Left ventricle myocardium inferior (tissue), 1 donor: ENCODE measurements at regions of chr3 and their contacts with region 1.

Region 1: DNA sequence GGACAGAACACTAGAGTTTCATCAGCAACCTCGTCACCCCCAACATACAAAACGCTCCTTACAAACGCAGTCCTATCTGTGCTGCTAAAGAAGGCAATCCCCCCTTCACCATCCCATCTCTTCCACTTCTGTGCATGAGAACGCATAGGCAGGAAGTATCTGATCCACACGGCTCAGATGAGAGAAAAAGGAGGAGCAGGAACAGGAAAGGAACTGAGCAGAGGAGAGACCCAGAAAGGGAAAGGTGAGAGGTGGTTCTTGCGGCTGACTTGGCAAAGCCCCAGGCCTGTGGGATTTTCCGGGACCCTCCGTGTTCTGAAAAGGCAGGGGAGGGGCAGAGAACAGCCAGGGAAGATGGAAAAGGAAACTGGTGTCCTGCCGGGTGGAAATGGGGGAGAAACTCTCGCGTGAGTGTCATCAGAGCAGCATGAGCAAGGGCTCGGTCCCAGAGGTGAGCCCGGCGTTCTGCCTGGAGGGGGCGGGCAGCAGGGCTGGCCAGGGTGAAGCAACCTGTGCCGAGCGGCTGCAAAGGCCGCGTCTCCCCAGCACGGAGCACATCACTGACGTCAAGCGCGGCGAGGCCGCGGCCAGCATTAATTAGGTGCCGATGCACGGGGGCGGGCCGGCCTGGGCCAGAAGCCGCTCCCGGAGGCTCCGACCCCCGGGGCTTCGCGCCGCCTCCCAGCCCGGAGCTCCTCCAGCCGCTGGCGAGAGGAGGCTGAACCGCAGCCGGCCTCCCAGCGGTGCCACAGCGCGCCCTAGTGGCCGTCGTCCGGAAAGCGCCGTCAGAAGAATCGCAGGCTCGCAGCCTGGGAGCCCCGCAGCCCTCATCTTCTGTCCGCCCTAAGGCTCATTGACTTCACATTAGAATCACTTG is 35.8 kb downstream of the CPN2 start:
- DNase-seq: peak; percentile 86
- H3K4me3 ChIP-seq: peak overlapping the region; percentile 67
- H3K27ac ChIP-seq: peak overlapping the region; percentile 57
- H3K4me1 ChIP-seq: peaks cover 28% of the 10 kb centered on the region
- H3K27me3 ChIP-seq: peaks cover 63% of the 10 kb centered on the region
- CTCF ChIP-seq: peak; percentile 98

Region 2: DNA sequence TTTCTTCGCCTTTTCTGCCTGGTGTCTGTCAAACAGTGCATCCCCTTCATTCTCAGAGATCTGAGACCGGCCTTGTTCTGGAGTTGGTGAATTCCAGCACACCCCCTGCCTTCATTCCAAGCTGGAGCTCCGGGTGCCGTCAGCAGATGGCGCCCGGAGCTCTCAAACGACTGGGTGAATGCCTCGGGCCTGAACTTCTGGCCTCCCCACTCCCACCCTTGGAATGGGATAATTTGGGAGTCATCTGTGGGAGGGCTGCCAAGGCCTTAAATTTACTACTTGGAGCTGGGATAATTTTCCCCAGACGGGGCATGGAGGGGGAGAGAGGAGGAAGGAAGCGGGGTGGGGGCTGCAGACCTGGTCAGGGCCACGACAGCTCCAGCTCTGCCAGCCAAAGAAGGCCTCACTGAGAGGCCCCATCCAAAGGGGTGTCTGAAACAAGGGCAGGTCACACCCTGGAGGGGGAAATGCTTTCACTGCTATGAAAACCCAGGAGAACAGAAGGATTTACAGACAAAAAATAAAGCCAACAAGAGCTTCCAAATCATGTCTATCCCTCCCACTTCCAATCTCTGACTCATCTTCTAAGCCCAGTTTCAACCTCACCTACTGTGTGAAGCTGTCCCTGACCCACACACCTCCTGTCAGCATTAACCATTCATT is 534.4 kb before region 1 on chr3:
- intact Hi-C with region 1: loop called (anchors 5 kb)
- DNase-seq: peak; percentile 69
- H3K4me3 ChIP-seq: no peak overlapping the region
- H3K27ac ChIP-seq: peak overlapping the region; percentile 29
- H3K4me1 ChIP-seq: peaks cover 12% of the 10 kb centered on the region
- H3K27me3 ChIP-seq: peaks cover 87% of the 10 kb centered on the region
- CTCF ChIP-seq: peak; percentile 89